ENCODE measurements at regions of chr6 and their contacts with region 1.

Region 1: GRCh38 chr6:76724760-76725159 is 652.3 kb upstream of the IMPG1 start:
- DNase-seq: no peak
- H3K4me3 Mint-ChIP-seq: no peak overlapping the region
- H3K27ac Mint-ChIP-seq: no peak overlapping the region
- H3K4me1 Mint-ChIP-seq: no peaks in the 10 kb centered on the region
- H3K27me3 Mint-ChIP-seq: no peaks in the 10 kb centered on the region

Region 2: DNA sequence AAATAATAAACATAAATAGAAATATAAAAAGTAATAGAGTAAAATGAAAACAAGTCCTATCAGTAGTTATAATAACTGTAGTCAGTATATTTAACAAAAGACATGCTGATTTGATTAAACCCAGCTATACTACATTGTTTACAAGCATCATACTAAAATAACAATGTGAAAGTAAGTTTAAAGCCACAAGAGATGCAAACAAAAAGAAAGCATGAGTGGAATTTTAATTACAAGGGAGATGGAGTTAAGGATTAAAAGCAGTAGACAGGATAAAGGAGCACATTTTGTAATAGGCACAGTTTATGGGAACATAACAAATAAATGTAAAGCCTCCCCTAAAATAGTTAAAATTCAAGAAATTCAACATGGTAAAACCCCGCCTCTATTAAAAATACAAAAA is 1081.6 kb before region 1 on chr6:
- CTCF ChIA-PET with region 1: no interaction called
- intact Hi-C with region 1: no loop called
- DNase-seq: no peak
- H3K4me3 Mint-ChIP-seq: no peak overlapping the region
- H3K27ac Mint-ChIP-seq: no peak overlapping the region
- H3K4me1 Mint-ChIP-seq: no peaks in the 10 kb centered on the region
- H3K27me3 Mint-ChIP-seq: no peaks in the 10 kb centered on the region

Region 3: DNA sequence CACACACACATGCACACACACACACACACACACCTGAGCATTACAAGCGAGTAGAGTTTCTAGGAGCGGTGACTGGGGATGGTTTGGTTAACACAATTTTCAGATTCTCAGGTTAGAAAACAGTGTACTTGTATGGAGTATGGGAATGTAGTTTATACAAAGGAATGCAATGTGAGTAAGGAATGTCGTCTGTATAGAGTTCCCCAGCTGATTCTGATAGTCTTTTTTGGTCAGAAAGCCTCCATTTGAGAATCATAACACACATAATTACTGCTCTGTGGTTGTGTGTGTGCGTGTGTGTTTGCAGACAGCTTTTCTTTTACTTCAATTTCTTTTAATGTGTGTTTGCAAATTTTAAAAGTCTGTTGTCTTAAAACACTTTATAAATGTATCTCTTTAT is 882.6 kb before region 1 on chr6:
- CTCF ChIA-PET with region 1: no interaction called
- intact Hi-C with region 1: no loop called
- DNase-seq: no peak
- H3K4me3 Mint-ChIP-seq: no peak overlapping the region
- H3K27ac Mint-ChIP-seq: no peak overlapping the region
- H3K4me1 Mint-ChIP-seq: no peaks in the 10 kb centered on the region
- H3K27me3 Mint-ChIP-seq: no peaks in the 10 kb centered on the region

Region 4: DNA sequence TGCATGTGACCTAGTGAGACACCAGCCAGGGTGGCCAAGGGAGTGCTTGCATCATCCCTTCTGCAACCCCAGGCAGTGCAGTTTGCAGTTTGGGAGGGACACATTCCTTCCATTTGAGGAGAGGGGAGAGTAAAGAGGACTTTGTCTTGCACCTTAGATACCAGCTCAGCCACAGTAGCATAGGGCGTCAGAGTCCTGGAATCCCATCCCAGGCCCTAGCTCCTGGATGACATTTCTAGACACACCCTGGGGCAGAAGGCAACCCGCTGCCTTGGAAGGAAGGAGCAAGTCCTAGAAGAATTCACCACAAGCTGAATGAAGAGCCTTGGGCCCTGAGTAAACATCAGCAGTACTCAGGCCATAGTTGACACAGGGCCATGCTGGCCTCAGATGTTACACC is 28.1 kb after region 1 on chr6:
- CTCF ChIA-PET with region 1: no interaction called
- intact Hi-C with region 1: loop called (anchors 5 kb)
- DNase-seq: no peak
- H3K4me3 Mint-ChIP-seq: no peak overlapping the region
- H3K27ac Mint-ChIP-seq: no peak overlapping the region
- H3K4me1 Mint-ChIP-seq: no peaks in the 10 kb centered on the region
- H3K27me3 Mint-ChIP-seq: no peaks in the 10 kb centered on the region

Region 5: GRCh38 chr6:76790045-76790796 is 65.5 kb after region 1 on chr6:
- CTCF ChIA-PET with region 1: no interaction called
- intact Hi-C with region 1: no loop called
- DNase-seq: no peak
- H3K4me3 Mint-ChIP-seq: no peak overlapping the region
- H3K27ac Mint-ChIP-seq: no peak overlapping the region
- H3K4me1 Mint-ChIP-seq: no peaks in the 10 kb centered on the region
- H3K27me3 Mint-ChIP-seq: no peaks in the 10 kb centered on the region

Measured in activated naive CD4-positive, alpha-beta T cell treated with anti-CD3 and anti-CD28 coated beads for 36 hours (primary cell).